AG04450 (cell line): ENCODE measurements at regions of chr1 and their contacts with region 1.

Region 1: DNA sequence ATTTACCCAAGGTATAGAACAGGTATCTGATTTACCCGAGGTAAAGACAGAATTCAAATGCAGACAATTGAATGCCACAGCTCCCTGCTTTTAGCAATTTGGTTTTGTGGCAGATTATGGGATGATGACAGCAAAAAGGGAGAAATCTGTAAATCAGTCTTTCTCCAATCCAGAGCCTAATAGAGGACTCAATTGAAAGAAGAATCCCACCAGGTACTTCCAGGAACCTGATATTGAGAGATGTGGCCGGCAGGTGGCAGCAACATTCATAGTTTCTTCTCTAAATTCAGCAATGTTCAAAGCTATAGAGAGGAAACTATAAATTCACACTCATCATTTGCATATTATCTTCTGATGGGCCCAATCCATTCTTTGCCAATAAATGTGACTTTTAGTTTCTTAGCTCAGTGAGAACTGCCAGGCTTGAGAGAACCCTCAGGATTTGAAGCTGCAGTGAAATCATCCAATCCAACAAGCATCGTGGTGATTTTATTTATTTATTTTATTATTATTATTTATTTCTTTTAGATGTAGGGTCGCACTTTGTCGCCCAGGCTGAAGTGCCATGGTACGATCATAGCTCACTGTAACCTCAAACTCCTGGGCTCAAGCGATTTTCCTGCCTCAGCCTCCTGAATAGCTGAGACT is 9.8 kb upstream of the PHACTR4 start:
- DNase-seq: no peak
- H3K4me3 ChIP-seq: no peak overlapping the region
- H3K27ac ChIP-seq: no peak overlapping the region
- H3K27me3 ChIP-seq: no peaks in the 10 kb centered on the region
- CTCF ChIP-seq: peak; percentile 73

Region 2: GRCh38 chr1:27849951-27850350 is 509.8 kb before region 1 on chr1:
- CTCF ChIA-PET with region 1: no interaction called
- POLR2A ChIA-PET with region 1: no interaction called
- DNase-seq: no peak
- H3K4me3 ChIP-seq: no peak overlapping the region
- H3K27ac ChIP-seq: no peak overlapping the region
- H3K27me3 ChIP-seq: no peaks in the 10 kb centered on the region
- CTCF ChIP-seq: no peak

Region 3: DNA sequence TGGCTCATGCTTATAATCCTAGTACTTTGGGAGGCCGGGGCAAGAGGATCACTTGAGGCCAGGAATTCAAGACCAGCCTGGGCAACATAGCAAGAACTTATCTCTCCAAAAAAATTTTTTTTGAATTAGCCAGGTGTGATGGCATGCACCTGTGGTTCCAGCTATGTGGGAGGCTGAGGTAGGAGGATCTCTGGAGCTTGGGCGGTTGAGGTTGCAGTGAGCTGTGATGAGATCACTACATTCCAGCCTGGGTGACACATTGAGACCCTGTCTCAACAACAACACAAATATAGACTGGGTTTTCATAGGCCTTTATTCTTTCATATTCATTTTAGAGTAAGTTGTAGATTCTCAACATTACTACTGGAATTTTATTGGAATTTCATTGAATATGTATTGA is 18.1 kb before region 1 on chr1:
- CTCF ChIA-PET with region 1: interaction called, 13 read pairs
- POLR2A ChIA-PET with region 1: interaction called, 9 read pairs
- DNase-seq: no peak
- H3K4me3 ChIP-seq: no peak overlapping the region
- H3K27ac ChIP-seq: no peak overlapping the region
- H3K27me3 ChIP-seq: no peaks in the 10 kb centered on the region
- CTCF ChIP-seq: no peak

Region 4: DNA sequence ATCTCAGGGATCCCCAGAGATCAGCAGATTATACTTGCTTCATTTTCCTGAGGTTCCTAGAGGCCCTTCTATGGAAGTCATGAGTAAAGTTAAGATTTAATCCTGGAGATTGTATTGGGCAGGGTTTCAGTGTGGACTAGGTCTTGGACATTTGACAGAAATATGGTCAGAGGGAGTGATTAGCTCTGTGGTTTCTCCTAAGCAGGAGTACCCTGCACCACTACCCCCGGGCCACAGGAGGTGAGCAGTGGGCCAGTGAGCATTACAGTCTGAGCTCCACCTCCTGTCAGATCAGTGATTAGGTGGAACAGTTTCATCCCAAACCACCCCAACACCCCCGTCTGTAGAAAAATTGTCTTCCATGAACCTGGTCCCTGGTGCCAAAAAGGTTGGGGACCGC is 53.0 kb after region 1 on chr1:
- CTCF ChIA-PET with region 1: interaction called, 14 read pairs
- POLR2A ChIA-PET with region 1: no interaction called
- DNase-seq: no peak
- H3K4me3 ChIP-seq: no peak overlapping the region
- H3K27ac ChIP-seq: no peak overlapping the region
- H3K27me3 ChIP-seq: no peaks in the 10 kb centered on the region
- CTCF ChIP-seq: no peak

Region 5: DNA sequence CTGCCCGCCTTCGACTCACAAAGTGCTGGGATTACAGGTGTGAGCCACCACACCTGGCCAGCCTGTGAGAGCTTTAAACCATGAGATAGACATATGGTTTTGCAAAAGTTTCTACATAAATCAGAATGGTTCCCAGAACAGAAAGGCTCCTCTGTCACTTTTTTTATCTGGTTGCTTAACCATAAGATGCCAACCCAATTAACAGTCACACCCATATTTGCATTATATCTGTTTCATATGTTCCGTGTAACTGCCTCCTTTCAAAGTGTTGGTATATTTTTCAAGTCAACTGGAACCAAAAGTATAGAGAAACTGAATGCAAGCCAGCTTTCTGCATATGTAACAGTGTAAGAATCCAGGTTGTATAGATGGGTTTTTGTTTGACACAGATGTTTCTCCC is 122.4 kb after region 1 on chr1:
- CTCF ChIA-PET with region 1: interaction called, 13 read pairs
- POLR2A ChIA-PET with region 1: no interaction called
- DNase-seq: no peak
- H3K4me3 ChIP-seq: no peak overlapping the region
- H3K27ac ChIP-seq: no peak overlapping the region
- H3K27me3 ChIP-seq: no peaks in the 10 kb centered on the region
- CTCF ChIP-seq: no peak